ENCODE measurements at regions of chr17 and their contacts with region 1.

Region 1: DNA sequence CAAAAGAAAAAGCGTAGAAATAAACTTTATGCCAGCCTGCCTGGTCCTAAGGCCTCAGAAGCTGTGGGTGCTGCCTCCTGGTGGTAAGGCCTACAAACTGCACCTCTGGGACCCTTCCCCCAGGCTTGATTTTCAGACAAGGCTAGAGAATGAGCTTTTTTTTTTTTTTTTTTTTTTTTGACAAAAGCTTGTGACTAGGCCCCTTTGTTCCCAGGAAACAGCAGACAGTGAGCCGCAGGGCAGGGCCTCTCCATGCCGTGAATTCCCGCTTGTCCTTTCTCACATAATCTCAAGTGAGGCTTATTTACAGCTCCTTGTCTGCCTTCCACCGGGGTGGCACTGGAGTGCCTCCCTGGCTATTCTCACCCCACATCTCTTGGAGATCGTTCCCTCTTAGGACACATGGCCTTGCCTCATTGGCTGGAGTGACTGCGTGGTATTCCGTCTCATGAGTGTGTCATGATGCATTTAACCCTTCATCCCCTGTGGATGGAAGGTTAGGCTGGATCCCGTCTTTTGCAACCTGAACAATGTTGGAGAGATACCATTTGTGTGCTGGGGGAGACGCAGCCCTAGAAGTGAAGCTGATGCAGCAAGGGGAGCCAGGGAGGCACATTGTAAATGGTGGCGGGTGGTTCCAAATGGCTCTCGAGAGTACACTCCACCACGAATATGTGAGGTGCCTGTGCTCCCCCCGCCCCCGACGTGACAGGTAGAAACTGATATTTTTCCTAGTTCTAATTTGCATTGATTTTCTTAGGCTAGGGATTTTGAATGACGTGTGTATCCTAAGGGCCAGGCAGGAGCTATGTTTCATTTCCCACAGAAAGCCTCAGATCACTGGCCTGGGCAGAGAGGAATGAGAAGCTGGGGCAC is 49.6 kb downstream of the USP22 start:
- DNase-seq: peak in 1 of 2 donors; percentile 76
- H3K4me3 ChIP-seq: peak overlapping the region; percentile 40 to 46
- H3K27ac ChIP-seq: no peak overlapping the region
- H3K4me1 ChIP-seq: no peaks in the 10 kb centered on the region
- H3K27me3 ChIP-seq: no peaks in the 10 kb centered on the region
- CTCF ChIP-seq: peak; percentile 75 to 85 (median 81)

Region 2: DNA sequence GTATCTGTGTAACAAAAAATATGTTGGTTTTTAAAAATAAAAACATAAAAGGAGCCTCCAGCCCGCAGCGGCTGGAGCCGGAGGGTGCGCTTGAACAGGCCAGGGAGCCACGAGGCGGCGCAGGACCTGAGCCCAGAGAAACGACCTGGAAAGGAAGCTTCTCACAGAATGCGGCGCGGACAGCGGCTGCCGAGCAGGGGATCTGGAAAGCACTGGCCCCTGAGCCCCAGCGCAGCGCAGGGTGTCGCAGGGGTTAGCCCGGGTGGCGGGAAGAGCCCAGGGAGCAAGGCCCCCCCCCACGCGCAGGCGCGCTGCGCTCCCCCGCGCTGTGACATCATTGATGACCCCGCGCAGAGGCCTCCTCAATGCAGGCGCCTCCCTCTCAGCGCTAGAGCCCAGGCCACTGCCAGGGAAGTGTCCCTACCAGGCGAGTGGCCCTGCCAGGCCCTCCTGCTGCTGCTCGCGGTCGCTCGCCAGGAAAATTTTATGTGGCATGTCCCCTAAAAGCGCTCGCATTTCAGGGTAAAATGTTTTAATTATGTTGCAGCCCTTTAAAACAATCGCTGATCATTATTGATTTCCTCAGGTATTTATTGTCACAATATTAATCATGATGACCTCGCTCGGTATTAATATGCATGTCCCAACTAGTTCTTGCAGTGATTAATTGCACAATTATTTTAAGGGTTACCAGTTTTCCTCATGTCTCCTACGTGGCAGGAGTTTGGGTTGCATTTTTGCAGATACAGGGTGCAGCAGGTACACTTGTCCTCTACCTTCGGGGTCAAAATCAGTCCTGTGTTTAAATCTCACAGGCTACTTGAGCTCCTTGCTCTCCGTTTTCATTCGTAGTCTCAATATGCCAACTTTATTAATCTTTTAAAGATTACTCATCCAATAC is 84.6 kb before region 1 on chr17:
- intact Hi-C with region 1: loop called (anchors 10 kb)
- DNase-seq: peak; percentile 47 to 90
- H3K4me3 ChIP-seq: peak overlapping the region; percentile 20 to 64
- H3K27ac ChIP-seq: peak overlapping the region; percentile 56 to 81
- H3K4me1 ChIP-seq: peaks cover 0 to 4% of the 10 kb centered on the region in 2 donors
- H3K27me3 ChIP-seq: no peaks in the 10 kb centered on the region
- CTCF ChIP-seq: peak; percentile 61 to 72 (median 65)

Region 3: DNA sequence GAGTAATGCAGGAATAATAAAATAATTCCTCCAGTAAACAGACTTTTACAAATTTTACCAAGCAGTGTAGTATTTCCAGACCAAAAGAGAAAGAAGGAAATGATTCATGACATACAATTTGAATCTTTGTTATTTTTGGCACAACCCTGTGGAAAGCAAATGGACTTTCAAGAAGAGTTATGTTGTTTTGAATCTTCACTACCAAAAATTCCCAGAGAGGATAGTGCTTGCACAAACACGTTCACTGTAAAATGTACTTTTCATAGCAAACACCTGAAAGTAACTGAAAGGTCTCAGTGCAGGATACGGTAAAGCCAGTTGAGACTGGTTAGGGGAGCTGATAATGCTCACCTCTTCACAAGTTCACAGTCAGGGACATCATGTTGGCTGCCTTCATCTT is 57.5 kb before region 1 on chr17:
- intact Hi-C with region 1: no loop called
- DNase-seq: no peak
- H3K4me3 ChIP-seq: peak overlapping the region in 1 of 2 donors; percentile 16
- H3K27ac ChIP-seq: no peak overlapping the region
- H3K4me1 ChIP-seq: peaks cover 0 to 2% of the 10 kb centered on the region in 2 donors
- H3K27me3 ChIP-seq: no peaks in the 10 kb centered on the region
- CTCF ChIP-seq: no peak

Region 4: GRCh38 chr17:20966870-20967269 is 26.4 kb before region 1 on chr17:
- intact Hi-C with region 1: no loop called
- DNase-seq: no peak
- H3K4me3 ChIP-seq: no peak overlapping the region
- H3K27ac ChIP-seq: no peak overlapping the region
- H3K4me1 ChIP-seq: no peaks in the 10 kb centered on the region
- H3K27me3 ChIP-seq: no peaks in the 10 kb centered on the region
- CTCF ChIP-seq: no peak

Region 5: DNA sequence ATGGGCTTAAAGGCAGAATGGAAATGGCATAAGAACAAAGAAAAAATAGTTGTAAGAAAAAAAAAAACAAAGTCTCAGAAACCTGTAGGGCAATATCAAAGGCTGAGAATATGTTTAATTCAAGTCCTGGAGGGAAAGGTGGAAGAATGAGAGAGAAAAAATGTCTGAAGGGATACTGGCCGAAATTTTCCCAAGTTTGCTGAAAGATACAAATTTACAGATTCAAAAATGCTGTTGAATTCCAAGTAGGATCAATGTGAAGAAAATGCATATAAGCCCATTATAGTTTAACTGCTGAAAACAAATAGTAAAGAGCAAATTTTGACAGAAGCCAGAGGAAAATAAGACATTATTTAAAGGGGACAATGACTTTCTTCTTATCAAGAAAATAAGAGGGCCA is 56.2 kb after region 1 on chr17:
- intact Hi-C with region 1: no loop called
- DNase-seq: no peak
- H3K4me3 ChIP-seq: no peak overlapping the region
- H3K27ac ChIP-seq: no peak overlapping the region
- H3K4me1 ChIP-seq: no peaks in the 10 kb centered on the region
- H3K27me3 ChIP-seq: no peaks in the 10 kb centered on the region
- CTCF ChIP-seq: no peak